ENCODE measurements at regions of chr12 and their contacts with region 1.

Region 1: DNA sequence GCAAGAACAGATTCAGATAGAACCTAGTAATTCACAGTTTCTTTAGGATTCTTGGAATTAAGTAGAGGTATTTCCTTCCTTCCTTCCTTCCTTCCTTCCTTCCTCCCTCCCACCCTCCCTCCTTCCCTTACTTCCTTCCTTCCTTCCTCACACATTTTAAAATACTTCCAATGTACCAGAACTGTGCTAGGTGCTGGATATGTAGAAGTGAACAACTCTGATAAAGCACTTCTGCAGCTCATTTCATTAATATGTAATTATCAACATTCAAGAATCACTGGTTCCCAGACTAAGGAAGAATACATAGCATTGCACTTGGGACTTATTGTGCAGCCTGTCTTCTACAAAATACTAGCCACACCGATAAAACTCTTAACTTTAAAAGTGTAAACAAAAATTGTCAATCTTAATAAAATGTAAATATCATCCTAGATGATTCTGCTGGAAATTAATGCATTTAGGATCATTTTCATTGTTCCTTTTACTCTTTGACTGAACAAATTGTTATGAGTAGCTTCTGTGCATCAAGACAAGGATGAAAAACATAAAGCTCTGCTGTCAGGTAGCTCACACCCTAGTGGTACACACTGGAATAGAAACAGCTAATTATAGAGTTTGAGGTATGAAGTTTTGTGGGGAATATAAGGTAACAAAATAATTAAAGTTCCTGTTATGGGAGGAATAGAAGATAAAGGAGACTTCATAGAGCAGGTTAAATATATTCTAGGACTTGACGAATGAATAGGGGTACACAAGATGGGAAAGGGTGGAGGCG is 99.9 kb upstream of the MYF6 start:
- DNase-seq: no peak
- H3K4me3 ChIP-seq: no peak overlapping the region
- H3K27ac ChIP-seq: no peak overlapping the region
- H3K4me1 ChIP-seq: no peaks in the 10 kb centered on the region
- H3K27me3 ChIP-seq: no peaks in the 10 kb centered on the region
- CTCF ChIP-seq: peak; percentile 40 to 50

Region 2: DNA sequence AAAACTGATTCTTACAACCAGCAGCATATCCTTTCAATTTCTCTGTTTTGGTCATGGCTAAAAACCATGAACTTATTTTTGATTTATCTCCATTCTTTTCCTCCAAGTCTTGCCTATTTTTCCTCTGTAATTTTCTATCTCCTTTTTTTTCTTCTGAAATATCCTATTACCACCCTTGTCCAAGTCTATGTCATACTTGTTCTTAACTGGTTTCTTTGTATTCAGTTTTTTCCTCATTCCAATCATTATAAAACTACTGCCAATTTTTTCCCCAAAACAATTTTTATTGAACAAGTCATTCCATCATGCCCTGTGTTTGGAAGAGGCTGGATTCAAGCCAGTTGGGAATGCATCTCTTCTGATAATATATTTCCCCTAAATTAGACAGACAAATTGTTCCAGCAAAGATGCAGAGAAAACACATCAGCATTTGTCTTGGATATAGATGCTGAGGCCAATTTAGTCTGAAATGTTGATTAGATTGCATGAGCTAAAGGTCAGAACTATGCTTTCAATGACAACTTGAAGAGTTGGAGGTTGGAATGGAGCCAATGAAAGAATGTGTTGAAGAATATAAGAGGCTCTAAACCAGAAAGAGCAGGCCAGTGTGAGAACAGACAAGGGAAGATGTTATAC is 477.5 kb before region 1 on chr12:
- CTCF ChIA-PET with region 1: no interaction called
- dilution Hi-C with region 1: no loop called
- in situ Hi-C with region 1: no loop called
- intact Hi-C with region 1: no loop called
- DNase-seq: no peak
- H3K4me3 ChIP-seq: no peak overlapping the region
- H3K27ac ChIP-seq: no peak overlapping the region
- H3K4me1 ChIP-seq: no peaks in the 10 kb centered on the region
- H3K27me3 ChIP-seq: no peaks in the 10 kb centered on the region
- CTCF ChIP-seq: no peak

Region 3: DNA sequence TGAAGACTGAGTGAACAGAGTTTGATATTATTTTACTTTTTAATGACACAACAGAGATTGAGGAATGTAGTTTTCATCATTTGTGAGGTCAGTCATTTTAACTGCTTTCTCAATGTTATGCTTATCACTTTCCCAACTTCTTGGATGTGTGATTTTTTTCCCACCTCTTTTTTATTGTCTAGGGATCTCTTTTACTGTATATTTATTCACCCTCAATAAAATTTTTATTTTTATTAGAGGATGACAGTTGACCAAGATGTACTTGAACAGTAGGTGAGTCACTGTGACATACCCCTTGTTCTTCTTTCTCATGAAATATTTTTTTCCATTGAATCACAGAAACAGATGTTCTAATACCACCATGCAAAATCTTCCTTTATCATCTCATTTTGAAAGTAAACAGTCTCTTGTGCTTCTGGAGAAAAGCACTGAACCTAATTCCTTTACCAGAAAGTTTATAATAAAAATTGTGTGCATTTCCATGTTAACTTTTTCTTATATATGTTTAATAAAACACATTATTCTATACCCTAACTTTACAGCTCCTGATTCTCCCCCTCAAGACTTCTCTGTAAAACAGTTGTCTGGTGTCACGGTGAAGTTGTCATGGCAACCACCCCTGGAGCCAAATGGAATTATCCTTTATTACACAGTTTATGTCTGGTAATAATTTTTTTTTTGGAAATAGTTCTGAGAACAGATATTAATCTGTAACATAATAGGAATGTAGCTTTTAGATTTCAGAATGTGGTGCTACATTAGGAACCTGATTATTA is 97.6 kb before region 1 on chr12:
- CTCF ChIA-PET with region 1: no interaction called
- dilution Hi-C with region 1: no loop called
- in situ Hi-C with region 1: loop called in 1 of 2 experiments (anchors 10 kb)
- intact Hi-C with region 1: no loop called
- DNase-seq: peak; percentile 5
- H3K4me3 ChIP-seq: no peak overlapping the region
- H3K27ac ChIP-seq: no peak overlapping the region
- H3K4me1 ChIP-seq: no peaks in the 10 kb centered on the region
- H3K27me3 ChIP-seq: no peaks in the 10 kb centered on the region
- CTCF ChIP-seq: no peak

Region 4: DNA sequence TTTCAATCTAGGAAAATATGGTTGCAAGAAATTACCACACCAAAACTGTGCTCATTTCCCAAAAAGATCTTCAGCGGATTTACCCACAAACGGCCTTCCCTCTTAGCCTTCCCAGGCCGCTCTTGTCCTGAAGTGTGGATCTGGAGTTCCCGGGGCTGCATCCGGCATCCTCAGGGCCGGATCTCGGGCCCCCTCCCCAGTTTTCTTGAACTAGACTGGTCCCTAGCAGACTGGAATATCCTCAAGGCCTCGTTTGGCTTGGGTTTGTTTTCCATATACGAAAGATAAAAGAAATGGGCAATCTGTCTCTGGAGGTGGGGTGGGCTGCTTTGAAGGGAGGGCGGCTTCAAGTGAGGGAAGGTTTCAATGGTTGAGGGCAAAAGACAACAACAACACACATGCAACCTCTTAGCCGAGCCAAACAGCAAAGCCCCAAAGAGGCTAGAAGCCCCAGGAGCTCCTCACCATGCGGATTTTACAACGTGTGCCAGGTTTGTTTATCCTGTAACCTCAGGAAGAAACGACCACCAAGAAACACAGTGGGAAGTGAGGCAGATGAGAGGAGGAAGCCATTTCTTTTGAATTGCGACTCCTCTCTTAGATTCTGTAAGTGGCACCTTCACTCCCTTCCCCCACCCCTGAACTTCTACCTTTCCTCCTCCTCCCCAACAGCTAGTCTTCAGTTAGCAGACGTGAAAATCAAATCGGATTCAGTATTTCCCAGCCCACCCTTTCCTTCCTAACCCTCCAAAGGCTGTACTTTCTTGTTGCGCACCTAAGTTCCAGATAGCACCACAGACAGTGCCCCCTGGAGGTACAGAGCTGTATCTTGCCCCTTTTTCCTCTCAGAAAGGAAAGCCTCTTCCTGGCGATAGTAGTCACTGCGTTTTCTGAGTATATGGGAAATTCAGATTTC is 102.5 kb after region 1 on chr12:
- CTCF ChIA-PET with region 1: no interaction called
- dilution Hi-C with region 1: no loop called
- in situ Hi-C with region 1: no loop called
- intact Hi-C with region 1: no loop called
- DNase-seq: no peak
- H3K4me3 ChIP-seq: no peak overlapping the region
- H3K27ac ChIP-seq: no peak overlapping the region
- H3K4me1 ChIP-seq: no peaks in the 10 kb centered on the region
- H3K27me3 ChIP-seq: peaks cover 20% of the 10 kb centered on the region
- CTCF ChIP-seq: peak; percentile 51 to 55

Region 5: DNA sequence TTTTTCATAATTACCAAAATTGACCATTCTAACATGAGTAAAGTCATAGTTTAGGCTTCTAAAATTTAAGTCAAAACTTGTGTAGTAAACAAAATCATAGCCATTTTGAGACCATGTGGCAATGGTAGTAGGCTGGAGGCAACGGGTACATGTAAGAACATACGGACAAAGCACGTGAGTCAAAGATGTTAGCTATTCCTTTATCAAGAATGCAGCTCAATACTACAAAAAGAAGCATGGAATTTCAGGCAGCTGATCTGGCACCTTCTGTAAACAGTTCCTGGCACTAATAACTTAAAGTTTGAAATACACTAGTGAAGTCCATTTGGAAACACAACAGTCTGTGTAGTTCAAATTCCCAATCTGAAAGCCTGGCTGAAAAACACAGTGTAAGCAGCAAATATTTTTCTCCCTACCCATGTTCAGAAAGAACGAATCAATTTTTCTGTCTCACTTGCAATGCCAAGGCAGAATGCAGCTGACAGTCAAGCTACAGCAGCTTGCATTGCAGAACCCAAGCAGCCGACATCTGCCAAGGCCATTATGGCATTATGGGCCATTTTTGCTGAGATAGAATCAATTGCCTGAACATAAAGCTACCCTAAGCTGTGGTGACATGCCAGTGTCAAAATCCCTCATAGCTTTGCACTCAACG is 138.4 kb after region 1 on chr12:
- CTCF ChIA-PET with region 1: no interaction called
- dilution Hi-C with region 1: no loop called
- in situ Hi-C with region 1: no loop called
- intact Hi-C with region 1: no loop called
- DNase-seq: no peak
- H3K4me3 ChIP-seq: no peak overlapping the region
- H3K27ac ChIP-seq: no peak overlapping the region
- H3K4me1 ChIP-seq: no peaks in the 10 kb centered on the region
- H3K27me3 ChIP-seq: peaks cover 4% of the 10 kb centered on the region
- CTCF ChIP-seq: no peak

Region 6: DNA sequence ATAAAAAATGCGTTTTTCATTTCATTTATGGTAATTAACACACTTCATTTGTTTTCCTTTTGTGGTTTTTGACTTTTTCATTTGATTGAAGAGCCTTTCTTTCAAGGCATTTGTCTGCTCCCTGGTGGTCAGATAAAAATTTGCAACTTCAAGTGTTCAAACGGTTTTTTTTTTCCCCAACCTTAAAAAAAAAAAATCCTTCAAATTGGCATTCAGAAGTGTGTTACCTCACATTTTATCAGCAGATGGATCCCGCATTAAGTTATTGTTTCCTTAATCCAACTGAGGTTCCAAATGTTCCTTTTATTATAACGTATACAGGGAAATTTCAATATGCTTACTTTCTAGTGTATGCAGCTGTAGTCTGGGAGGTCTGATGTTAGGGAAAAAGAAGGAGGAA is 156.3 kb after region 1 on chr12:
- CTCF ChIA-PET with region 1: no interaction called
- dilution Hi-C with region 1: no loop called
- in situ Hi-C with region 1: no loop called
- intact Hi-C with region 1: no loop called
- DNase-seq: peak; percentile 16
- H3K4me3 ChIP-seq: no peak overlapping the region
- H3K27ac ChIP-seq: no peak overlapping the region
- H3K4me1 ChIP-seq: no peaks in the 10 kb centered on the region
- H3K27me3 ChIP-seq: peaks cover 4% of the 10 kb centered on the region
- CTCF ChIP-seq: peak; percentile 39 to 64